Cardiac septum (tissue), 1 donor: ENCODE measurements at regions of chr14 and their contacts with region 1.

Region 1: DNA sequence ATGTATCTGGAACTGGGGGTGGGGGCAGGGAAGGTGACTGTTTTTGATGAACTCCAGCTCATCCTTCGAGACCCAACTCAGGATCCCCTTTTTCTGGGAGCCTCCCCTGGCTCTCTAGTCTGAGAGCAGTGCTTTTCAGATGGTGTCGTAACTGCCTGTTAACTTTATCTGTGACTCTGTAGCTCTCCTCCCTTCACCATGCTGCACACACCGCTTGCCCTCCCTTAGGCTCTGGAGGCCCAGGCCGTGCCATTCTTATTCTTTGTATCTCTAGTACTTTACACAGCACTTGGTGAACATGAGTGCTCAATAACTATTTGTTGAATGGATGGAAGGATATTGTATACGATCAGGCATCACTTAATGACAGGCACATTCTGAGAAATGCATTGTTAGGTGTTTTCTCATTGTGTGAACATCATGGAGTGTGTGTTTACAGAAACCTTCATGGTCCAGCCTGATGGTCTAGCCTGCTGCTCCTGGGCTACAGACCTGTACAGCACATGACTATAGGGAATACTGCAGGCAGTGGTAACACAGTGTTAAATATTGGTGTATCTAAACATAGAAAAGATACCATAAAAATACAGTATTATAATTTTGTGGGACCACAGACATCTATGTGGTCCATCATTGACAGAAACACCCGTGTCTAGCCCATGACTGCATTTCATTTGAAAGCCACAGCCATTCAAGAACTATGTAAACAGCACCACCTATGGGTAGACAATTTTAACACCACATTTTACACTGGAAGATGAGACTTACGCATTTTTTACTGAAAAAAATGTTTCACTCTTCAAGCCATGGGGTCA is 91.8 kb downstream of the EML1 start:
- DNase-seq: no peak

Region 2: GRCh38 chr14:99729991-99730868 is 154.8 kb before region 1 on chr14:
- intact Hi-C with region 1: loop called (anchors 2 kb)
- DNase-seq: peak; percentile 82